Endothelial cell of umbilical vein (primary cell): ENCODE measurements at regions of chr16 and their contacts with region 1.

Region 1: GRCh38 chr16:65117811-65118448 is 3.9 kb downstream of the CDH11 start:
- DNase-seq: peak; percentile 87
- H3K4me3 ChIP-seq: no peak overlapping the region
- H3K27ac ChIP-seq: no peak overlapping the region
- H3K4me1 ChIP-seq: peaks cover 26% of the 10 kb centered on the region
- H3K27me3 ChIP-seq: no peaks in the 10 kb centered on the region
- CTCF ChIP-seq: peak; percentile 85 to 95
- POLR2A ChIP-seq: no peak

Region 2: GRCh38 chr16:63461248-63461841 is 1656.6 kb before region 1 on chr16:
- CTCF ChIA-PET with region 1: interaction called, 36 read pairs
- POLR2A ChIA-PET with region 1: no interaction called
- dilution Hi-C with region 1: no loop called
- intact Hi-C with region 1: loop called (anchors 1 kb)
- DNase-seq: peak; percentile 72
- H3K4me3 ChIP-seq: no peak overlapping the region
- H3K27ac ChIP-seq: no peak overlapping the region
- H3K4me1 ChIP-seq: peaks cover 9% of the 10 kb centered on the region
- H3K27me3 ChIP-seq: no peaks in the 10 kb centered on the region
- CTCF ChIP-seq: peak; percentile 42 to 53
- POLR2A ChIP-seq: no peak

Region 3: DNA sequence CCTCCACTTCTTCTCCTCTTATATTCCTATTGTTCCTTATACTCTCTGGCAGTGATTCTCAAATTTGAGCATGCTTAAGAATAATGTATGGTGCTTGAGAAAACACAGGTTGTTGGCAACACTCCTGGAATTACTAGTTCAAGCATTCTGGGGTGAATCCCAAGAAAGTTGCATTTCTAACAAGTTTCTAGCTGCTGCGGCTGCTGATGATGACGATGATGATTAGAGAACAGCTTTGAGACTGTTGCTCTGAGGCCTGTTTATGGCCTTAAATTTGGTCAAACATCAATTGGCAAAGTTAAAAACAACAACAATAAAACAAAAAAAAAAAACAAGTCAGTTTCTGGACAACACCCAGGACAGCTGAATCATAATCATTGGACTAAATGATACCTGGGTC is 958.0 kb before region 1 on chr16:
- CTCF ChIA-PET with region 1: no interaction called
- POLR2A ChIA-PET with region 1: no interaction called
- dilution Hi-C with region 1: no loop called
- intact Hi-C with region 1: loop called (anchors 1 kb)
- DNase-seq: no peak
- H3K4me3 ChIP-seq: no peak overlapping the region
- H3K27ac ChIP-seq: no peak overlapping the region
- H3K4me1 ChIP-seq: peaks cover 34% of the 10 kb centered on the region
- H3K27me3 ChIP-seq: no peaks in the 10 kb centered on the region
- CTCF ChIP-seq: no peak
- POLR2A ChIP-seq: no peak

Region 4: DNA sequence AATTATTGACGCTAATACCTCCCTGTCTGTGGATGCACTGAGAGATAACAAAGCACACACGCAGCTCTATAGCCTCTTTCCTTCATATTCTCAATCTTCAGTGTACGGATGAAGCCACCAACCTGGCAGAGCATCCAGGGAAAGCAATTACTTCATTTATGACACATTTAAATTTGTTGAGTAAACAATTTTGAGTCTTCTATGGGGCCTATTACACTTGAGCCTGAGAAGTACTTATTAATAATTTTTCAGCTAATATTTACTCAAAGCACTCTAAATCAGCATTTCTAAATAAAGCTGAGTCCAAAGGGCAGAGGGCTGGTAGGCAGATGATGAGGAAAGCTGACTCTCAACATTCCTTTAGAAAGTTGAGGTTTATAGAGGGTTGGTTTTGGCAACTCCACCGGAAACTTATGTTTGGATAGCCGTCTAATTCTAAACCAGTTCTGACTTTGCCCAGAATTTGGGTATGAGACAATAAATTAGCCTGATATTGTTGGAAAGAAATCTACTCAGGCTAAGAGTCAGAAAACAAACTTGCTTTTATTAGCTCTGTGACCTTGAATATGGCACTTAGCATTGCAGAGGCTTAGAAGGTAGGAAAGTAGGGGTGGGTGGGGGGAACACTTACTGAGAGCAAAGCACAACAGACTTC is 639.6 kb before region 1 on chr16:
- CTCF ChIA-PET with region 1: no interaction called
- POLR2A ChIA-PET with region 1: no interaction called
- dilution Hi-C with region 1: no loop called
- intact Hi-C with region 1: loop called (anchors 5 kb)
- DNase-seq: peak; percentile 90
- H3K4me3 ChIP-seq: no peak overlapping the region
- H3K27ac ChIP-seq: peak overlapping the region; percentile 48
- H3K4me1 ChIP-seq: peaks cover 19% of the 10 kb centered on the region
- H3K27me3 ChIP-seq: no peaks in the 10 kb centered on the region
- CTCF ChIP-seq: no peak
- POLR2A ChIP-seq: no peak

Region 5: DNA sequence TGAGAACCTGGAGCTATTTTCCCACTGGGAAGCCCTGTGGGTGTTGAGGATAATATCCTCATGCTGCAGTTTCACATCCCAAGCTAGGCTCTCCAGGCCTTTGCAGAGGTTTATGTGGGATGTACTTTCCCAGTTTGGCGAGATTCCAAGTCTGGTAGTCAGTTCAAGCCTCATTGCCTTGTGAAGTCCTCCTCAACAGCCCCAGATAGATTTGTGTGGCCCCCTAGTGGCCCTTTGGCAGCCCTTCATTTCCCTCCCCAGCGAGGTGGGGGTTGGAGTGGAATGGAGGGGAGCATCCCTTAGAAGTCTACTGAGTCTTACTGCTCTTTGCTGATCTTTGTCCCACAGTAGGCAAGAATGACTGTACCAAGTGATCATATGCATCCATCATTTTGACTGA is 134.0 kb before region 1 on chr16:
- CTCF ChIA-PET with region 1: no interaction called
- POLR2A ChIA-PET with region 1: no interaction called
- dilution Hi-C with region 1: no loop called
- intact Hi-C with region 1: loop called (anchors 1 kb)
- DNase-seq: peak; percentile 80
- H3K4me3 ChIP-seq: no peak overlapping the region
- H3K27ac ChIP-seq: no peak overlapping the region
- H3K4me1 ChIP-seq: no peaks in the 10 kb centered on the region
- H3K27me3 ChIP-seq: no peaks in the 10 kb centered on the region
- CTCF ChIP-seq: peak; percentile 74 to 79
- POLR2A ChIP-seq: no peak

Region 6: GRCh38 chr16:65176603-65177002 is 58.7 kb after region 1 on chr16:
- CTCF ChIA-PET with region 1: no interaction called
- POLR2A ChIA-PET with region 1: no interaction called
- dilution Hi-C with region 1: no loop called
- intact Hi-C with region 1: no loop called
- DNase-seq: no peak
- H3K4me3 ChIP-seq: no peak overlapping the region
- H3K27ac ChIP-seq: no peak overlapping the region
- H3K4me1 ChIP-seq: no peaks in the 10 kb centered on the region
- H3K27me3 ChIP-seq: no peaks in the 10 kb centered on the region
- CTCF ChIP-seq: no peak
- POLR2A ChIP-seq: no peak

Region 7: DNA sequence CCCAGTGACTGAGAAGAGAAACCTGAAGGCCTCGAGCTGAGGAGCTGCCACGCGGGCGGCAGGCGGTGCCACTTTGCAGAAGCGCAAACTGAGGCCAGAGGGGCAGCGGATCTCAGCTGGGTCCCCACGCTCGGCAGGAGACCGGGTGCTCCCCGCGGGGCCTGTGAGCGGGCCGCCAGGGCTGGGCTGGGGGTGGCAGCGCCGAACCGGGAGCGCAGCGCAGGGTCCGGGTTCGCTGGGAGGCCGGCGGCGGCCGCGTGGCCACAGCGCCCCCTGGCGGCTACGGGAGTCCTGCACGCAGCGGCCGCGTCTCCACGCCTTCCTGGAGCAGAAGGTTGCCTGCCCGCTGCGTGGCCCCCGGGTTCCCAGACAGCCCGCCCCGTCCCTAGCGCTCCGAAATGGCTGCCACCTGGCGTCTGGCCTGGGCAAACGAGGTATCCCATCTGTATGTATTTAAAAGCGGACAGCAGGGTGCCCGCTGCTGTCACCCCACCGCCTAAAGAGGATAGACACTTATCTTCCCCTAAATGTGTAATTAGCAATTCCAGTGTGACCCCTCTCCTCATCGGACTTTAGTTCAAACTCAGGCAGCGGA is 1152.5 kb after region 1 on chr16:
- CTCF ChIA-PET with region 1: interaction called, 6 read pairs
- POLR2A ChIA-PET with region 1: no interaction called
- dilution Hi-C with region 1: no loop called
- intact Hi-C with region 1: loop called (anchors 1 kb)
- DNase-seq: peak; percentile 53
- H3K4me3 ChIP-seq: peak overlapping the region in 1 of 3 experiments; percentile 25
- H3K27ac ChIP-seq: no peak overlapping the region
- H3K4me1 ChIP-seq: peaks cover 4% of the 10 kb centered on the region
- H3K27me3 ChIP-seq: peaks cover 0 to 7% of the 10 kb centered on the region in 2 experiments
- CTCF ChIP-seq: peak; percentile 91
- POLR2A ChIP-seq: no peak